GM18951 (cell line): ENCODE measurements at regions of chr16 and their contacts with region 1.

Region 1: DNA sequence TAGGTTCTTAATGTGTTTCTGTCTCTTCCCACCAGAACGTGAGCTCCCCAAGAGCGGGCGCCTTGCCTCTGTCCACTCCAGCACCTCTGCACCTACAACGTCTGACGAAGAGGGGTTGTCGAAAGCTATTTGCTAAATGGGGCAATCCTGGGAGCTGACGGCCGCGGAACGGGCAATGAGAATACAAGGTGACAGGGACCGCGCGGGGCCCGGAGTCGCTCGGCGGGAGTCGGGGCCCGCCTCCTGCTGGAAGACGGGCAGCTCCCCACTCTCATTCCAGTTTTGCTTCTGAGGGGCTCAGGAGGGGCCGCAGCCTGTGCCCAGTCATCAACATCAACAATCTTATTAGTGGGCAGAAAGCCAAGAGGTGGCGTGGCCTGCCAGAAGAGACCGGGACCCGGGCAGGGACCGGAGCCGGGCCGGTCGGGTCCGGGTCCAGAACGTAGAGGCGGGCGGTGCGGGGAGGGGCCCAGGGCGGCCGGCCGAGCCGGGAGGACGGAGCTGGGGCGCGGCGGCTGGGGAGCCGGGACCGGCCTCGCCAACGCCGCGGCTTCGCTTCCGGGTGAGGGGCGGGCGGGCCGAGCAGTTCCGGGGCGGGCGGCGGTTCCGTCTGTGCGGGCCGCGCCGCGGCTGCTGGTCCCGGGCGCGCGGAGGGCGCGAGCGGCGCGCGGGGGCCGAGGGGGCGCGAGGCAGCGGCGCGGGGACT is at the start of gene MOSMO:
- POLR2A ChIP-seq: peak; percentile 89

Region 2: GRCh38 chr16:22077700-22078313 is 70.1 kb after region 1 on chr16:
- in situ Hi-C with region 1: loop called (anchors 10 kb)
- POLR2A ChIP-seq: no peak

Region 3: GRCh38 chr16:22188595-22189442 is 181.2 kb after region 1 on chr16:
- in situ Hi-C with region 1: loop called (anchors 10 kb)
- POLR2A ChIP-seq: no peak